ENCODE measurements at regions of chr2 and their contacts with region 1.

Region 1: DNA sequence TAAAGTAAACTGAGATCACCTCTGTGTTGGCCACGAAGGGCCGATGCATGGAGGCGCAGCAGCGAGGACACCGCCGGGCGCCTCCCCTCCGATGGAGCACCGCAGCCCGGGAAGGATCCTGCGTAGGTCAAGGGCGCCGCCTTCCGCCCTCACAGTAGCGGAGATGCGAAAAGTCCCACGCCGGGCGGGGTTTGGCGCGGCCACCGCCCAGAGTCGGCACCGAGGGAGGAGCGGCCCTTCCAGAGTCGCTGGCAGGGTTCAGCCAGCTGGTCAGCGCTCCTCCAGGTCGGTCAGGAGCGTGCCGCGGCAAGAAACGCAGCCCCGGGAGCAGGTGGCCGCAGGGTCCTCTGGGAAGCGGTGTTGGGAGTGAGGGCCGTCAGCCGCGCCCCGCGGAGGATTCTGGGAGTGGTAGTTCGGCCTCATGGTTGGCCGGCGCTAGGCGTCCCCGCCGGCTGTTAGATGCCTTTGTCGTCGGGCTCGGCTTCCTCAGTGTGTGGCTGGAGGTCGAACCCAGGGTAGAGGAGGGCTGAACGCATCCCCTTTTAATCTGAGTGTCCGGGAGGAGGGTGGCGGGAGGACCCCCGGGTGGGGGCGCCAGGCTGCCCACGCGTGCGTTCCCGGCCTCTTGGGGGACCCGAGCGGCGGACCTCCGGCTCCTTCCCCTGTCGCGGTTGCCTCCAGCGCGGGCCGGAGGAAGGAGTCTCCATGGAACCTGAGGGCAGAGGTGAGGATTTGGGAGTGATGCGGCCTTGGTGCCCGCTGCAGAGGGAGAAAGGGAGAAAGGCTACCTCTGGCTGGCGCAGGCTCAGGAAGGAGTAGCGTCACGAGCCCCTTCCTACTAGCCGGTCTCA is at the start of gene ZNF892:
- DNase-seq: peak; percentile 86
- H3K4me3 Mint-ChIP-seq: peak within 1 kb of the TSS; percentile 88
- H3K27ac Mint-ChIP-seq: peak within 1 kb of the TSS; percentile 57
- H3K4me1 Mint-ChIP-seq: peaks cover 12% of the 10 kb centered on the region
- H3K27me3 Mint-ChIP-seq: no peaks in the 10 kb centered on the region
- total RNA-seq, gene ZNF892: 2.7 to 3.1 TPM

Region 2: DNA sequence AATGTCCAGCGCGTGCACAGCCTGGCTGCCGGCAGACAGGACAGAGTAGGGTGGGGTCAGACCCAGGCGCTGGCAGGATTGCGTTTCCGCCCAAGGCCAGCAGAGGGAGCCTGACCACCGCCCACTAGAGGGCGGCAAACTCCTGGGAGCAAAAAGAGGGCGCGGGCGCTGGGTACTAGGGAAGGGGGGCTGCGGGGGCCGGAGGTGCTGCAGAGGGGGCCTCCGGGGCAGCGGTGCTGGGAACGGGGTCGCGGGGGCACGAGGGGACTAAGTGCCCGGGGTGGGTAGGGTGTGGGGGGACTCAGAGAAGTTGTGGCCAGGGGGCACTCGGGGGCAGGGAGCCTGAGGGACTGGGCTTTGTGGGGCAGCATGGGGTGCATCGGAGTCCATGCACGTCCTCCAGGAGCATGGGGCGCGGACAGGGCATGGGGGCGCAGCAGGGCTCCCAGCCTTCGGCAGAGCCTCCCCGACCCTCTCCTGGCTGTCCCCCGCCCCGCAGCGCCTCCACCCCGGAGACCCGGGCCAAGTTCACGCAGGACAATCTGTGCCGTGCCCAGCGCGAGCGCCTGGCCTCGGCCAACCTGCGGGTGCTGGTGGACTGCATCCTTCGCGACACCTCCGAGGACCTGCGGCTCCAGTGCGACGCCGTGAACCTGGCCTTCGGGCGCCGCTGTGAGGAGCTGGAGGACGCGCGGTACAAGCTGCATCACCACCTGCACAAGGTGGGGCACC is 332.9 kb before region 1 on chr2:
- CTCF ChIA-PET with region 1: no interaction called
- intact Hi-C with region 1: loop called (anchors 1 kb)
- DNase-seq: peak; percentile 75
- H3K4me3 Mint-ChIP-seq: no peak overlapping the region
- H3K27ac Mint-ChIP-seq: no peak overlapping the region
- H3K4me1 Mint-ChIP-seq: no peaks in the 10 kb centered on the region
- H3K27me3 Mint-ChIP-seq: peaks cover 15% of the 10 kb centered on the region

Region 3: DNA sequence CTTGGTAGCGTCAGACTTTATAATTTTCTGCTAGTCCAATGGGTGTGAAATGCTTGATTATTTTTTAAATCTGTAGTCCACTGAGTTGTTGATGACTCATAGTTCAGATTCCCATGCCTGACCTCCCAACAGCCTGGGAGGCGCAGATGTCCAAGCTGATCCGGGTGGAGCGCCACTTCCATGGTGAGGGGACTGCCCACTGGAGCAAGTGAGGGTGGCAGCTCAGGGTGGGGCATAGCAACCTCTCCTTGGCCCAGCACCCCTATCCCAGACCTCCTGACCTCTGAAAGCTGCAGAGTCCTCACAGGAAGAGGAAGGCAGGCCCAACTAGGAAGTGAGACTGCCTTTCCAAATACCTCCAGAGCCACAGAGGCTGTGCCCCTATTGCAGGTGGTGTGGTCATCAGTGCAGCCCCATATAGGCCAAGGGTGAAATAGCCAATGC is 177.4 kb before region 1 on chr2:
- CTCF ChIA-PET with region 1: no interaction called
- intact Hi-C with region 1: no loop called
- DNase-seq: no peak
- H3K4me3 Mint-ChIP-seq: no peak overlapping the region
- H3K27ac Mint-ChIP-seq: peak overlapping the region; percentile 41
- H3K4me1 Mint-ChIP-seq: peaks cover 63% of the 10 kb centered on the region
- H3K27me3 Mint-ChIP-seq: no peaks in the 10 kb centered on the region

Region 4: DNA sequence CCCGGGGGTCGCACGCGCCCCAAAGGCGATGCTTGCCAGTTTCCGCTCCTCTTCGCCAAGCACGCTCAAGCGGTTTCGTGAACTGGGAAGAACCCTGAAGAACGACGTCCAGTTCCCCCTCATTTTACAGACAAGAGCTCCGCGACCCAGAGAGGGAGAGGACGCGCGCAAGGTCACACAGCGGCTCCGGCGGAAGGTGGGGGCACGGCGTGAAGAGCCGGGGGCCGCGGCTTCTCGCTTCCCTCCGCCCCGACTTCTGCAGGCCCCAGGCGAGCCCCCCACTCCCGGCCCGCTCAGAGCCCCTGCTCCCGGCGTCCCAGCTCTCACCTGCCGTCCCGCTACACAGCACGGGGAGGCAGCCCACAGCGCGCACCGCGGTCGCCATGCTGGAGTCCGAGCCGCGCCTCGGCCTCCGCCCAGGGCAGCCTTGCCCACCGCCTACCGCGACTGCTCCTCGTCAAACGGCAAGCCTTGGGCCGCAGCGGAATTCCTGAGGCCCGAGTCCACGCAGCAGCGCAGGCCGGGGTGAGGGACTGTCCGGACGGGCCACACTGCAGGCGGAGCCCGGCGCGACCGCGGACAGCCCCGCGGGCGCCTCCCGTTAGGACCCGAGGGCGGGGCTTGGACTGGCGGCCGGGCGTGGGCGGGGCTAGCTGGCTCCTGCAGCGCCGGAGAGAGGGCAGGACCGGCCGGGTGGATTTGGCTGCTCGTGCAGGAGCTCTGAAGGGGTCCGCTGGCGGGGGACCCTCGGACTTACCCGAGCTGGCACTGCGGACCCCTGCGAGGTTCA is 85.7 kb before region 1 on chr2 and contains the start of gene MRPS5:
- CTCF ChIA-PET with region 1: no interaction called
- intact Hi-C with region 1: loop called (anchors 1 kb)
- DNase-seq: peak; percentile 90
- H3K4me3 Mint-ChIP-seq: peak within 1 kb of the TSS; percentile 93
- H3K27ac Mint-ChIP-seq: peak within 1 kb of the TSS; percentile 90
- H3K4me1 Mint-ChIP-seq: peaks cover 40% of the 10 kb centered on the region
- H3K27me3 Mint-ChIP-seq: no peaks in the 10 kb centered on the region
- total RNA-seq, gene MRPS5: 90.4 to 96.0 TPM

Region 5: DNA sequence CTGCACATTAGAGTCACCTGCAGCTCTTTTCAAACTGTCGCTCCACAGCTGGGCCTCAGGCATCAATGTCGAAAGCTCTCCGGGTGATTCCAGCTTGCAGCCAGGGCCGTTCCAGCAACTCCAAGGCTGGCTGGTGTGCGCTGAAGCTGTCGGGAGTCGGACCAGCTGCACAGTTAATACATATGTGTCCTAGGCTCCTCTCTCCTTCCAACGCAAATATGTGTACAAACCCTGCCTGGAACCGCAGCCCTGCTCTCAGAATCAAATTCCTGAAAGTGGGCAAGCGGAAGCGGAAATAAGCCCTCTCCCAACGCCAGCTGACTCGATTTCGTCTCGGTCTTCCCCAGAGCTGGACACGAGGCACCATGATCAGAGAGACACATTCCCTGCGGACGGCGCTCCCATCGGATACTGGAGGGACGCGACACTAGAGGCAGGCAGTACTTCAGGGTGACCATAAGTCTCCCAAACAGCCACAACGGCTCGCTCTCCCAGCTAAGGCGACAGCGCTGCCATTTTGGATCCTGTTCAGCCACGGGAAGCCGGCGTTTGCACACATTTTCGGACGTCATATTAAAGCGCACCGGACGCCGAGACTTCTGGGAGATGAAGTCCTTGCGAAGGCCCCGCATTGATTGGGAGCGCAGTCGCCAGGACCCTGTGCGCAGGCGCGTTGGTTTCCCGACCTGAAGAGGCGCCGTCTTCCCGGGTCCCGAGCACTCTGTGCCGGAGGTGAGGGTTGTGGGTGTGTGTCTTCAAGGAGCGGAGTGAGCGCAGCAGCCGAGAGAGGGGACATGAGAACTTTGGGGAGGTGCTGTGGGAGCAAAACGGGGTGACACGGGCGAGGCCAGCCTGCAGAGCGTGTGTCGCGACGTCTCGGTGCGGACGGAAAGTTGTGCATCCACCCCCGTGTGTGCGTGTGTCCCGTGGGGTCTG is 41.9 kb before region 1 on chr2 and contains the start of gene ZNF2:
- CTCF ChIA-PET with region 1: no interaction called
- intact Hi-C with region 1: loop called (anchors 1 kb)
- DNase-seq: peak; percentile 99
- H3K4me3 Mint-ChIP-seq: peak within 1 kb of the TSS; percentile 99
- H3K27ac Mint-ChIP-seq: peak within 1 kb of the TSS; percentile 89
- H3K4me1 Mint-ChIP-seq: peaks cover 22% of the 10 kb centered on the region
- H3K27me3 Mint-ChIP-seq: no peaks in the 10 kb centered on the region
- total RNA-seq, gene ZNF2: 2.6 to 3.1 TPM

Region 6: DNA sequence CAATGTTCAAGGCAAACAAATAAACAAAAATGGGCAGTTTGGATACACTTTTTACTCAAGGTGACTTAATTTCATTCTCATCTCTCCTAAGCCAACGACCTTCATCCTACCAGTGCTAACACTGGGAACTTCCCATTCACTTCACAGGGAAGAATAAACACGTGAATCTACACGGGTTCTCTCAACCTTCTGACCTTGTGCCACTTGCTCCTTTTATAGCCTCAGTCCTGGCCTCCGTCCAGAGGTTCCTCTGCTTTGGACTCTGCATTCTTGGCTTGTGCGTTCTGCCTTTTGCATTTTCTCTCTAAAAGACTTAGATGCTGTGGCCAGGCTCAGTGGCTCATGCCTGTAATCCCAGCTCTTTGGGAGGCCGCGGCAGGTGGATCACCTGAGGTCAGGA is 27.9 kb before region 1 on chr2:
- CTCF ChIA-PET with region 1: no interaction called
- intact Hi-C with region 1: no loop called
- DNase-seq: no peak
- H3K4me3 Mint-ChIP-seq: no peak overlapping the region
- H3K27ac Mint-ChIP-seq: no peak overlapping the region
- H3K4me1 Mint-ChIP-seq: no peaks in the 10 kb centered on the region
- H3K27me3 Mint-ChIP-seq: no peaks in the 10 kb centered on the region

Region 7: DNA sequence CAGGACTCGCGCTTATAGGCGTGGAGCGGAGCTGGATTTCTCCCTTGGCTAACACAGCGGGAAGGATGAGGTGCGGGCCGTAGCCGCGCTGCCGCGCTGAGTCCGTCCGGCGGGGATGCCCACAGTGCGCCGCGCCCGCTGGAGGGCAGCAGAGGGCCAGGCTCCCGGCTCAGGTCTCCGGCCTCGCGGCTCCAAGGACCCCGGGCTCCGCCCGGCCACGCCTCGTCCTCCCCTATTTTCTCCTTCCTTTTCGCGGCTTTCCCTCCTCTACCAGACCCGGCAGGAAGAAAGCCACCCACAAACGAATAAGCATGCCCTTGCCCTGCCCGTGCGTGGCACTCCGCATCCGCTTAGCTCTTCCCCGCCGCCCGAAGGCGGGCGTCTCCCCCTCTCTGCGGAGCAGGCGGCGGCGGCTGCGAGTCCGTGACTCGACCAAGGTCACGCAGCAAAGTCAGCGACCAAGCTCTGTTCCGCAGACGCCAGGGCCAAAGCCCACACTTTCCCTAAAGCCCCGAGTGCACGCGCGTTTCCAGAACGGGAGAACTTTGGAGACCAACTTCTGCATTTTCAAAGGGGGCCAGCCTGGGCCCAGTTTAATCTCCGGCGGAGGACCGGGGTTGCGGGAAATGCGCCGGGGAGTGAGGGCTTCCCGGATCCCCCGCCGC is 138.4 kb after region 1 on chr2:
- CTCF ChIA-PET with region 1: no interaction called
- intact Hi-C with region 1: loop called (anchors 1 kb)
- DNase-seq: peak; percentile 72
- H3K4me3 Mint-ChIP-seq: peak overlapping the region; percentile 71
- H3K27ac Mint-ChIP-seq: no peak overlapping the region
- H3K4me1 Mint-ChIP-seq: peaks cover 3% of the 10 kb centered on the region
- H3K27me3 Mint-ChIP-seq: peaks cover 42% of the 10 kb centered on the region